ENCODE measurements at regions of chr7 and their contacts with region 1.

Region 1: DNA sequence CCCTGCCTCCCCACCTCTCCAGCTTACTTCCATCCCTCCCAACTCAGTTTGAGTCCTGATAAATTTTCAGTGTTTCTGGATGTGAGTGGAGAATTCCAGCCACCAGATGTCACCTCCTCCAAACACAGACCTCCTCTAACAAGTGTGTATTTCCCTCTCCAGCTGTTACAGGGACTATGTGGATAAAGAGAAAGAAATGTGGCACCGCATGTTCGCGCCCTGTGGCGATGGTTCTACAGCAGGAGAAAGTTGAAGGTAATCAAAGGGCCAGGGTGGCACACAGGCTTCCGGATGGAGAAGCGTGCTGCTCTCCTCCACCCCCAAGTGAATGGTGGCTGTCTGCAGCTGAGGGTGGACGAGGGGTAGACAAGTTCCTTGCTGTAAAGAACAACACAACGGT is 14.7 kb downstream of the FKBP6 start:
- DNase-seq: no peak
- ATAC-seq: peak; percentile 45 to 84 (median 76)
- H3K4me3 ChIP-seq: peak overlapping the region in 5 of 12 donors; percentile 3 to 45 (median 24)
- H3K27ac ChIP-seq: no peak overlapping the region
- H3K4me1 ChIP-seq: no peaks in the 10 kb centered on the region
- H3K27me3 ChIP-seq: peaks cover 0 to 13% (median 0%) of the 10 kb centered on the region in 9 donors
- CTCF ChIP-seq: peak in 11 of 12 donors; percentile 13 to 67 (median 44)
- POLR2A ChIP-seq: no peak

Region 2: DNA sequence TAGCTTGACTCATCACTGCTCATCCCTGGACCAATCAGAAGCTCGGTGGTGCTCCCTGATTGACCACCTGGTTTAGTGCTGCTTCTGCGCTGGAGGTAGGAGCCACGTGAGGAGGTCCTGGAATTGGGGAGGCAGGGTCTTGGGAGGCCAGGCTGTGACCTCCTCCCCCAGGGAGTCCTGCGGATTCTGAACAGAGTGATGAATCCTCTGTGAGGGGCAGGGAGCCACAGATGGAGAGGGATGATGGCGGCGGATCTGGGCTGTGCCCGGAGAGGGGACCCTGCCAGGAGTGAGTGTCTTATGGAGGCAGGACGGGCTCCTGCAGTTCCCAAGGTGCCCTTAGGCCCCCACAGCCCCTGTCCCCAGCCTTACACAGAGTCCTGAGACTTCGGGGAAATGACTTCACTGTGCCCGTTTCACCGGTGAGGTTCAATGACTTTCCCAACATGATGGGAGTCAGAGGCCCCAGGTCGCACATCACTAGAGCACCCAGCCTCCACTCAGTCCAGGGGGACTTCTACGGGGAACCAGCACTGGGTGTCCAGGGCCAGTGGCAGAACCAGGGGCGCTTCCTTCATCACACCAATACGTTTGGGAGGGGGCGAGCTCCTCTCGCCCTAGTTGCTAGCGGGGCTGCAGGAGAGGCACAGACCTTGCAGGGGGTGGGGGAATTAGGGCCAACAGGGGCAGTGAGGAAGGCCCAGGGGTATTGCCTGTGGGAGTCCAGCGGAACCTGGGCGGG is 34.2 kb after region 1 on chr7:
- intact Hi-C with region 1: no loop called
- DNase-seq: no peak
- ATAC-seq: no peak
- H3K4me3 ChIP-seq: no peak overlapping the region
- H3K27ac ChIP-seq: no peak overlapping the region
- H3K4me1 ChIP-seq: peaks cover 0 to 3% (median 0%) of the 10 kb centered on the region in 12 donors
- H3K27me3 ChIP-seq: peaks cover 0 to 36% (median 23%) of the 10 kb centered on the region in 9 donors
- CTCF ChIP-seq: no peak
- POLR2A ChIP-seq: no peak

Region 3: DNA sequence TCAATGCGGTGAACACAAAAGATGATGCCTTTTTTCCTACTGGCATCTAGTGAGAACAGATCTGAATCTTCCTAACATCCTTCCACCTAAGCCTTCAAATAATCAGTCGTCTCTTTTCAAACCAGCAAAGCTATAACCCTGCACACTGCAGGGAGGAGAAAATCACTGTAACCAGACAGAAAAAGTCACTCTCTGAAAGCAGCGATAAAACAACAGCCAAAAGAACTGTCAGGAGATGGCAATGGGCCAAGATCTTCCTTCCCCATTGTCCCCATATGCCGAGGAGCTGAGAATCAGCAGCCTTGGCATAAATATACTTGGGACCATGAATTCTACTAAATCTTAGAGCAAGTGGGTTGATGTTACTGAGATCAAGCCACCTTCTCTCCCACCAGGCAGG is 104.0 kb after region 1 on chr7:
- intact Hi-C with region 1: loop called in 8 of 10 experiments (anchors 1 to 10 kb)
- DNase-seq: no peak
- ATAC-seq: no peak
- H3K4me3 ChIP-seq: no peak overlapping the region
- H3K27ac ChIP-seq: no peak overlapping the region
- H3K4me1 ChIP-seq: peaks cover 0 to 8% (median 0%) of the 10 kb centered on the region in 12 donors
- H3K27me3 ChIP-seq: no peaks in the 10 kb centered on the region
- CTCF ChIP-seq: no peak
- POLR2A ChIP-seq: no peak

Region 4: DNA sequence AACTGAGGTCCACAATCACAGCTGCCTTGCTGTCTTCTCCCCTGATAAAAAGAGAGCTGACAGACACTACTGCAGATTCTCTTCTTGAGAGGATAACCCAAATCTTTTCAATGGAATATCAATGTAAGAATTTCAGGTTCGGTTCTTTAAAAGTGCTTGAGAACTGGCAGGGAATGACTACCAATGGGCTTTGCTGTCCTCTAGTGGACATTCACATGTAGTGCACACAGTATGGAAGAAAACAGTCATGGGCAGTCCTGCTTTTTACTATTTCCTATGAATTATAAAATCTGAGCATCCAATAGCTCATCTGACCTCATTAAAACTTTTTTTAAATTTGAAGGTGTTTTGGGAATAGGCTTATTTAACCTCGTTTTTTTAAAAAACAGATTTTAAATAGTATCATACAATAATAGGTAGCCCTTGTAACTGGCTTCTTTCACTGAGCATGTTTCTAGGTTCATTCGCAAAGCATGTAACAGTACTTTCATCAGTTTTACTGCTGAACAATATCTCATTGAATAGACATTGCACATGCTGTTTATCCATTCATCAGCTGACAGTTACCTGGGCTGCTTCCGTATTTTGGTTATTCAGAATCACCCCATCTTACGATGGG is 109.2 kb after region 1 on chr7:
- intact Hi-C with region 1: loop called in 9 of 10 experiments (anchors 1 to 10 kb)
- DNase-seq: no peak
- ATAC-seq: peak in 3 of 4 donors; percentile 71 to 80 (median 74)
- H3K4me3 ChIP-seq: no peak overlapping the region
- H3K27ac ChIP-seq: no peak overlapping the region
- H3K4me1 ChIP-seq: peaks cover 0 to 7% (median 0%) of the 10 kb centered on the region in 12 donors
- H3K27me3 ChIP-seq: no peaks in the 10 kb centered on the region
- CTCF ChIP-seq: peak; percentile 95 to 99 (median 98)
- POLR2A ChIP-seq: no peak